GM12878 (cell line): ENCODE measurements at regions of chr11 and their contacts with region 1.

Region 1: DNA sequence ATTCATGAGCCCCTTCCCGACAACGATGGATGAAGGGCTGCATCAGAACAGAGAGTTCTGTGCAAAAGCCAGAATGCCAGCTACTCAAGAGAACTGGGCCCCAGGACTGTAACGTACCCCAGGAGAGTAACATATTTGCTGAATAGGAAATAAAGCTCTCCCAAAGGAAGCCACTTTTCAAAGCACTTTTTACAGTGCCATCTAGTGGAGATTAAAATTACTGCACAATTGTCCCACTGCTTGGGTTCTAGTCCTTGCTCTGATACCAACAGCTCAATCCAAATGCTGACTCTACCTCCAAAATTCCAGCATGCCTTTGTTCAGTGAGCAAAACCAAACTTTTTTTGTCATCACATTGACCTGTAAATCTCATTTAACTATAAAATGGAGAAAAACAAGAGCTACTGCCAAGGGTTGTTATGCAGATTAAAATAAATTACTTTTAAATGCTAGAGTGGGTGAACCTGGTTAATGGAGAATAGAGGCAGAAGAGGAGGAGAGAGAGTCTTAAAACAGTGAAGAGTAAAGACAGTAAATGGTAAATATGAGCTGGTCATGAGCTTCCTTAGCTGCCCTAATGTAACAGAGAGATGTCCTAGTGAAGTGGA is 87.6 kb upstream of the FSHB start:
- DNase-seq: peak; percentile 9
- ATAC-seq: peak; percentile 85
- H3K4me3 ChIP-seq: no peak overlapping the region
- H3K27ac ChIP-seq: no peak overlapping the region
- H3K4me1 ChIP-seq: no peaks in the 10 kb centered on the region
- H3K27me3 ChIP-seq: no peaks in the 10 kb centered on the region
- CTCF ChIP-seq: peak; percentile 58 to 78 (median 68)
- EP300 ChIP-seq: no peak
- POLR2A ChIP-seq: no peak
- RAD21 ChIP-seq: peak; percentile 55

Region 2: DNA sequence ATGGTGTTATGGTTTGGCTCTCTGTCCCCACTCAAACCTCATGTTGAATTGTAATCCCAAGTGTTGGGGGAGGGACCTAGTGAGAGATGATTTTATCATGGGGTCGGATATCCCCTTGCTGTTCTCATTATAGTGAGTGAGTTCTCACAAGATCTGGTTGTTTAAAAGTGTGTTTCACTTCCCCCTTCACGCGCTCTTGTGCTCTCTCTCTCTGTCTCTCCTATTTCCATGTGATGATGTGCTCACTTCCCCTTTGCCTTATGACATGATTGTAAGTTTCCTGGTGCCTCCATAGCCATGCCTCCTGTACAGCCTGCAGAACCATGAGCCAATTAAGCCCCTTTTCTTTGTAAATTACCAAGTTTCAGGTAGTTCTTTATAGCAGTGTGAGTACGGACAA is 891.5 kb before region 1 on chr11:
- CTCF ChIA-PET with region 1: no interaction called
- POLR2A ChIA-PET with region 1: no interaction called
- RAD21 ChIA-PET with region 1: no interaction called
- SMC1A ChIA-PET with region 1: no interaction called
- in situ Hi-C with region 1: no loop called
- intact Hi-C with region 1: no loop called
- DNase-seq: peak; percentile 33
- ATAC-seq: peak; percentile 93
- H3K4me3 ChIP-seq: no peak overlapping the region
- H3K27ac ChIP-seq: no peak overlapping the region
- H3K4me1 ChIP-seq: no peaks in the 10 kb centered on the region
- H3K27me3 ChIP-seq: no peaks in the 10 kb centered on the region
- CTCF ChIP-seq: no peak
- EP300 ChIP-seq: peak in 1 of 2 experiments; percentile 20; a peak in 2 of 4 replicates
- POLR2A ChIP-seq: no peak
- RAD21 ChIP-seq: no peak

Region 3: GRCh38 chr11:29333993-29334775 is 809.0 kb before region 1 on chr11:
- CTCF ChIA-PET with region 1: no interaction called
- POLR2A ChIA-PET with region 1: no interaction called
- RAD21 ChIA-PET with region 1: no interaction called
- SMC1A ChIA-PET with region 1: no interaction called
- in situ Hi-C with region 1: no loop called
- intact Hi-C with region 1: no loop called
- DNase-seq: peak; percentile 31
- ATAC-seq: peak; percentile 87
- H3K4me3 ChIP-seq: no peak overlapping the region
- H3K27ac ChIP-seq: no peak overlapping the region
- H3K4me1 ChIP-seq: no peaks in the 10 kb centered on the region
- H3K27me3 ChIP-seq: no peaks in the 10 kb centered on the region; a peak in 1 of 4 replicates
- CTCF ChIP-seq: peak; percentile 37 to 66 (median 46); a peak in 5 of 6 replicates
- EP300 ChIP-seq: peak; percentile 80 to 81; a peak in 2 of 4 replicates
- POLR2A ChIP-seq: no peak
- RAD21 ChIP-seq: peak; percentile 71

Region 4: GRCh38 chr11:29432719-29433325 is 710.4 kb before region 1 on chr11:
- CTCF ChIA-PET with region 1: interaction called, 22 read pairs
- POLR2A ChIA-PET with region 1: no interaction called
- RAD21 ChIA-PET with region 1: interaction called, 9 read pairs
- SMC1A ChIA-PET with region 1: interaction called, 5 read pairs
- in situ Hi-C with region 1: loop called (anchors 10 kb)
- intact Hi-C with region 1: no loop called
- DNase-seq: no peak
- ATAC-seq: peak; percentile 40; the same call in 1 of the 3 replicates
- H3K4me3 ChIP-seq: no peak overlapping the region
- H3K27ac ChIP-seq: no peak overlapping the region
- H3K4me1 ChIP-seq: no peaks in the 10 kb centered on the region
- H3K27me3 ChIP-seq: no peaks in the 10 kb centered on the region
- CTCF ChIP-seq: peak; percentile 33 to 47 (median 37); a peak in 5 of 6 replicates
- EP300 ChIP-seq: no peak
- POLR2A ChIP-seq: no peak
- RAD21 ChIP-seq: peak; percentile 45

Region 5: DNA sequence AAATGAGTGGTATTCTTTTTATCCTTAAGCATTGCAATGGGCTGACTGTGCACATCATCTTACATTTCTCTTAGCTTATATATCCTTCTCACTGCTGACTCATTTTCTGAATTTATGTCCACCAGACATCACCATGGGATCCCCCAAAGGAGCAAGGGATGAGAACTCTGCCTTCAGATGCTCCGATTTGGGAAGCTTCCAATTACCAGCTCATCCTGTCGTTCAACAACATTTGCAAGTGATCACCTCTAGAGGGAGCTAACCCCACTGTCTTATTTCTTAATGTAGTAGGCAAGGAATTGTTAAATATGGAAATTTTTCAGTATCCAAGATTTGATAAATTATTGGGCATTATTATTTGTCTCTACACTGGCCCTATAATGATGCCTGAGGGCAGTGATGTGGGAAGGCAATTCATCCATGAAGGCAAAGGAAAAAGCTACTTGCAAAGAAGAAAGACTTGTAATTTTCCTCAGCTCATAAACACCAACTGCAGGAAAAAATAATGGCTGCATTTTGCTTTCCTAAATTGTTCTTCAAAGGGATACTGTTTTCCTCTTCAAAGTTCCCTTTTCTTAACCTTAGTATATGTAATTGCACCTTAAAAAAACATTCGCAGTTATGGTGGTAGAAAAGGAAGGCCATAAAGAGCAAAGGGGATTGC is 14.8 kb before region 1 on chr11:
- CTCF ChIA-PET with region 1: interaction called, 171 read pairs
- POLR2A ChIA-PET with region 1: no interaction called
- RAD21 ChIA-PET with region 1: interaction called, 5 read pairs
- SMC1A ChIA-PET with region 1: interaction called, 45 read pairs
- in situ Hi-C with region 1: no loop called
- intact Hi-C with region 1: no loop called
- DNase-seq: no peak
- ATAC-seq: peak; percentile 68
- H3K4me3 ChIP-seq: no peak overlapping the region
- H3K27ac ChIP-seq: no peak overlapping the region
- H3K4me1 ChIP-seq: no peaks in the 10 kb centered on the region
- H3K27me3 ChIP-seq: no peaks in the 10 kb centered on the region
- CTCF ChIP-seq: peak; percentile 59 to 69 (median 64)
- EP300 ChIP-seq: no peak
- POLR2A ChIP-seq: no peak
- RAD21 ChIP-seq: peak; percentile 57

Region 6: DNA sequence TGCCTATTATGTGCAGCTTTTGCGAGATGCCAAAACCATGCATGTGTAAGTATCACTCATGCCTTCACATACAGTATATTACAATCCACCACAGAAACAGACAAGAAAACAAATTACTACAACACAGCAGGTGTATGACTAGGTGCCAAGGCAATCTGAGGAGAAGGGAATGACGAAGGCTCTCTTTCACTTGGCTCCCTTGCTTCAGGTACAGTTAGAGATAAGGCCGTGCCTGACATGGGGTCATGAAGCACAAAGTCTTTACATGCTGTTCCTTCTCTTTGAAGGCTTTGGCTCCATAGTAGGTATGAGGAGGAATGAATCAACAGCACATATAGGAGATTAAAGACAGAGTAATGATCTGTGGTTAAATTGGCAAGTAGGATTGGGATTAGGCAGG is 22.4 kb after region 1 on chr11:
- CTCF ChIA-PET with region 1: interaction called, 16 read pairs
- POLR2A ChIA-PET with region 1: no interaction called
- RAD21 ChIA-PET with region 1: no interaction called
- SMC1A ChIA-PET with region 1: interaction called, 3 read pairs
- in situ Hi-C with region 1: no loop called
- intact Hi-C with region 1: no loop called
- DNase-seq: no peak
- ATAC-seq: no peak
- H3K4me3 ChIP-seq: no peak overlapping the region
- H3K27ac ChIP-seq: no peak overlapping the region
- H3K4me1 ChIP-seq: no peaks in the 10 kb centered on the region
- H3K27me3 ChIP-seq: no peaks in the 10 kb centered on the region; a peak in 1 of 4 replicates
- CTCF ChIP-seq: no peak
- EP300 ChIP-seq: no peak
- POLR2A ChIP-seq: no peak
- RAD21 ChIP-seq: no peak

Region 7: GRCh38 chr11:30196400-30197206 is 53.4 kb after region 1 on chr11:
- CTCF ChIA-PET with region 1: interaction called, 13 read pairs
- POLR2A ChIA-PET with region 1: no interaction called
- RAD21 ChIA-PET with region 1: interaction called, 9 read pairs
- SMC1A ChIA-PET with region 1: interaction called, 10 read pairs
- in situ Hi-C with region 1: no loop called
- intact Hi-C with region 1: no loop called
- DNase-seq: no peak
- ATAC-seq: peak; percentile 98
- H3K4me3 ChIP-seq: no peak overlapping the region
- H3K27ac ChIP-seq: no peak overlapping the region
- H3K4me1 ChIP-seq: no peaks in the 10 kb centered on the region
- H3K27me3 ChIP-seq: no peaks in the 10 kb centered on the region; a peak in 1 of 4 replicates
- CTCF ChIP-seq: peak; percentile 76 to 88 (median 85)
- EP300 ChIP-seq: no peak
- POLR2A ChIP-seq: no peak
- RAD21 ChIP-seq: peak; percentile 73

Region 8: GRCh38 chr11:30244265-30244664 is 101.1 kb after region 1 on chr11:
- CTCF ChIA-PET with region 1: interaction called, 36 read pairs
- POLR2A ChIA-PET with region 1: no interaction called
- RAD21 ChIA-PET with region 1: interaction called, 6 read pairs
- SMC1A ChIA-PET with region 1: interaction called, 10 read pairs
- in situ Hi-C with region 1: no loop called
- intact Hi-C with region 1: no loop called
- DNase-seq: no peak
- ATAC-seq: no peak
- H3K4me3 ChIP-seq: no peak overlapping the region
- H3K27ac ChIP-seq: no peak overlapping the region
- H3K4me1 ChIP-seq: no peaks in the 10 kb centered on the region
- H3K27me3 ChIP-seq: 0 out of 4 replicates have a peak, but pooled peaks cover 0 to 1% of the 10 kb centered on the region in 2 experiments
- CTCF ChIP-seq: no peak
- EP300 ChIP-seq: no peak
- POLR2A ChIP-seq: no peak
- RAD21 ChIP-seq: no peak

Region 9: GRCh38 chr11:30358536-30358935 is 215.3 kb after region 1 on chr11:
- CTCF ChIA-PET with region 1: no interaction called
- POLR2A ChIA-PET with region 1: no interaction called
- RAD21 ChIA-PET with region 1: no interaction called
- SMC1A ChIA-PET with region 1: no interaction called
- in situ Hi-C with region 1: no loop called
- intact Hi-C with region 1: no loop called
- DNase-seq: no peak
- ATAC-seq: no peak
- H3K4me3 ChIP-seq: no peak overlapping the region
- H3K27ac ChIP-seq: no peak overlapping the region
- H3K4me1 ChIP-seq: no peaks in the 10 kb centered on the region
- H3K27me3 ChIP-seq: no peaks in the 10 kb centered on the region; a peak in 1 of 4 replicates
- CTCF ChIP-seq: no peak
- EP300 ChIP-seq: no peak
- POLR2A ChIP-seq: no peak
- RAD21 ChIP-seq: no peak

Region 10: DNA sequence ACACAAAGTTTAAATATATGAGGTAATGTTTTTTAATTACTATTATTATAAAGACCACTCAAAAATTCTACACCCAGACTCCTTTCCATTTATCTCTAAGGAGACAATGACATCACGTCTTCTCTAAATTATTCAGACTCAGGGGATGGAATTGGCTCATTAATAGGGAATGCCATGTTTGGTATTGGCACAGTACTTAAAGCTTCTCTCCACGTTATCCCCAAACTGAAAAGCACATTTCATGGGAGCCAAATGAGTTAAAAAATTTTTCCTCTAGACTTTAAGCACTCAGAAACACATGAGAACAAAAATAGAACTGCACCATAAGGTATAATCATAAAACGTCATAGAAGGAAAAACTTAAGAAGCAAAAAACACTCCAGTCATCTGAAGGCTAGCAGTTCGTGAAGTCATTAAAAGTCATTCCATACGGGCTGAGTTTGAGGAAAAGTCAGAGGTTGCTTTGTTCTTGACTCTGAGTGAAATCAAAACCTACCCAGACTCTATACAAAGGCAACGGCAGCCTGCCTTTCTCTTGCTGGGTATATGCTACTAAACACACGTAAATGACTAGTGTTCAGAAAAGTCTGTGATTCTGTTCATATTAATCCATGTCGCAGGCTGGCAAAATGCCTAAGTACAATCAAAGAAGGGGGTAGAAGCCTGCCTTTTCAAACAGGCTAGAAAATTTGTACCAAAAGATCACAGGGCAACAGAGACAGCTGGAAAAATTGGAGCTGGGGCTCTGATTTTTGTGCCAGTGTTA is 451.6 kb after region 1 on chr11:
- CTCF ChIA-PET with region 1: no interaction called
- POLR2A ChIA-PET with region 1: no interaction called
- RAD21 ChIA-PET with region 1: no interaction called
- SMC1A ChIA-PET with region 1: no interaction called
- in situ Hi-C with region 1: no loop called
- intact Hi-C with region 1: no loop called
- DNase-seq: no peak
- ATAC-seq: no peak
- H3K4me3 ChIP-seq: no peak overlapping the region
- H3K27ac ChIP-seq: no peak overlapping the region
- H3K4me1 ChIP-seq: no peaks in the 10 kb centered on the region
- H3K27me3 ChIP-seq: no peaks in the 10 kb centered on the region; a peak in 1 of 4 replicates
- CTCF ChIP-seq: no peak
- EP300 ChIP-seq: no peak
- POLR2A ChIP-seq: no peak
- RAD21 ChIP-seq: no peak